ENCODE measurements at regions of chr4 and their contacts with region 1.

Region 1: DNA sequence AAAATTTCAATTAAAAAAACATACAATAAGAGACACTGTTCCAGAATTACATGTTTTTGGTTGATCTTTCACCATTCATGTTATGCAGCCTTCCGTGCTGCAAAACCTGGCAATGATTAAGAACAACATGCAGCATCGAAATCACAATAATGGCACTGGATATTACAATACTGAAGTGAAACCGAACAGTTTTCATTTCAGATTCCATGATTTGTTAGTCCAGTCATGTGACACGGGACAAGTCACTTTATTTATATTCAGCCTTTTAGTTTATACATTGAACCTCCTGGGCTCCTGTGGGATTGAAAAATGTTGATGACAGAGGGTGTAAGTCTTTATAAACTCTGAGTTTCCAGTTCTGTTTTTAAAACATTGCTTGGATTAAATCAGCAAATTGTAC is 142.5 kb upstream of the TTC29 start:
- DNase-seq: no peak
- H3K4me3 ChIP-seq: no peak overlapping the region
- H3K27ac ChIP-seq: no peak overlapping the region
- H3K4me1 ChIP-seq: no peaks in the 10 kb centered on the region
- H3K27me3 ChIP-seq: no peaks in the 10 kb centered on the region
- CTCF ChIP-seq: no peak
- POLR2A ChIP-seq: no peak

Region 2: GRCh38 chr4:147017081-147017480 is 71.1 kb before region 1 on chr4:
- intact Hi-C with region 1: no loop called
- DNase-seq: no peak
- H3K4me3 ChIP-seq: no peak overlapping the region
- H3K27ac ChIP-seq: no peak overlapping the region
- H3K4me1 ChIP-seq: no peaks in the 10 kb centered on the region
- H3K27me3 ChIP-seq: no peaks in the 10 kb centered on the region
- CTCF ChIP-seq: no peak
- POLR2A ChIP-seq: no peak

Region 3: DNA sequence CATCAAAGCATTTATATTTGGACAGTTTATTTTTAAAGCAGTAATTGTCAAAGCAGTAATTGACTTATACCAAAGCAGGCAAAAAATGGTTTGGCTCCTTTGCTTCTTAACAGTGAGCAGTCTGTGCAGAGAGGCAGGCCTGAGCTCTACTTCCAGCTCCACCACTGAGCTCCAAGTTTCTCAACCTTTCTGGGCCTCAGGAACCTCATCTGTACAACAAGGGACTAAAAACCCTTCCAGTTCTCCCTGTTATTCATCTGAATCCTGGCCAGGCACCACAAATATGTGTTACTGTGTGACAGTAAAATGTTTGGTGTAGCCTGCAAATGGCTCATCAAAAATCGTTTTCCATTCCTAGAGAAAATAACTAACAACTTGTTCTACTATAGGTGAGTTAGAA is 53.8 kb before region 1 on chr4:
- intact Hi-C with region 1: loop called (anchors 10 kb)
- DNase-seq: no peak
- H3K4me3 ChIP-seq: no peak overlapping the region
- H3K27ac ChIP-seq: no peak overlapping the region
- H3K4me1 ChIP-seq: no peaks in the 10 kb centered on the region
- H3K27me3 ChIP-seq: no peaks in the 10 kb centered on the region
- CTCF ChIP-seq: no peak
- POLR2A ChIP-seq: no peak

Measured in testis (tissue), 5 donors.